Activated CD4-positive, alpha-beta memory T cell treated with anti-CD3 and anti-CD28 coated beads for 36 hours (primary cell): ENCODE measurements at regions of chr10 and their contacts with region 1.

Region 1: GRCh38 chr10:6445501-6446316 is 134.4 kb downstream of the PRKCQ start:
- DNase-seq: peak; percentile 76
- H3K4me3 Mint-ChIP-seq: no peak overlapping the region
- H3K27ac Mint-ChIP-seq: peak overlapping the region; percentile 58
- H3K4me1 Mint-ChIP-seq: peaks cover 39% of the 10 kb centered on the region
- H3K27me3 Mint-ChIP-seq: no peaks in the 10 kb centered on the region

Region 2: GRCh38 chr10:6416892-6417512 is 28.7 kb before region 1 on chr10:
- CTCF ChIA-PET with region 1: interaction called, 6 read pairs
- POLR2A ChIA-PET with region 1: interaction called, 3 read pairs
- intact Hi-C with region 1: loop called (anchors 2 kb)
- DNase-seq: no peak
- H3K4me3 Mint-ChIP-seq: no peak overlapping the region
- H3K27ac Mint-ChIP-seq: no peak overlapping the region
- H3K4me1 Mint-ChIP-seq: no peaks in the 10 kb centered on the region
- H3K27me3 Mint-ChIP-seq: no peaks in the 10 kb centered on the region

Region 3: GRCh38 chr10:6431861-6432260 is 13.8 kb before region 1 on chr10:
- CTCF ChIA-PET with region 1: interaction called, 11 read pairs
- POLR2A ChIA-PET with region 1: no interaction called
- intact Hi-C with region 1: no loop called
- DNase-seq: no peak
- H3K4me3 Mint-ChIP-seq: no peak overlapping the region
- H3K27ac Mint-ChIP-seq: no peak overlapping the region
- H3K4me1 Mint-ChIP-seq: peaks cover 7% of the 10 kb centered on the region
- H3K27me3 Mint-ChIP-seq: no peaks in the 10 kb centered on the region

Region 4: DNA sequence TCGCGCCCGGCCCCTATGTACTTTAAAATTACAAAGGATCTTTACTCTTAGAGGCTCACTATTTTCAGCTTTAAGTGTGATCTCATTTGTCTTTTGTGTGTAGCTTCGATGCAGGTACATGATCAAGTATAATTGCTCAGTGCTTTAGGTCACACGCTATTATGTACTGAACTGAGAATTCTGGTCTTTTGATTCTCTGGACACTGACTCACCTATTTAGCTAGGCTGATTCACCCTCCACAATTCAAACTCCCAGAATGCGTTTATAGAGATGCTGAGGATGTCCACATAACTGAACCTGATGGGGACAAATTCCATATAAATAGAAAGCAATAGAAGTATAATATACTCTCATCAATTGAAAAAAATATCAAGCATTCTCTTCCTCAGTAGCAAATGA is 76.5 kb after region 1 on chr10:
- CTCF ChIA-PET with region 1: no interaction called
- POLR2A ChIA-PET with region 1: no interaction called
- intact Hi-C with region 1: no loop called
- DNase-seq: no peak
- H3K4me3 Mint-ChIP-seq: no peak overlapping the region
- H3K27ac Mint-ChIP-seq: no peak overlapping the region
- H3K4me1 Mint-ChIP-seq: peaks cover 73% of the 10 kb centered on the region
- H3K27me3 Mint-ChIP-seq: no peaks in the 10 kb centered on the region

Region 5: DNA sequence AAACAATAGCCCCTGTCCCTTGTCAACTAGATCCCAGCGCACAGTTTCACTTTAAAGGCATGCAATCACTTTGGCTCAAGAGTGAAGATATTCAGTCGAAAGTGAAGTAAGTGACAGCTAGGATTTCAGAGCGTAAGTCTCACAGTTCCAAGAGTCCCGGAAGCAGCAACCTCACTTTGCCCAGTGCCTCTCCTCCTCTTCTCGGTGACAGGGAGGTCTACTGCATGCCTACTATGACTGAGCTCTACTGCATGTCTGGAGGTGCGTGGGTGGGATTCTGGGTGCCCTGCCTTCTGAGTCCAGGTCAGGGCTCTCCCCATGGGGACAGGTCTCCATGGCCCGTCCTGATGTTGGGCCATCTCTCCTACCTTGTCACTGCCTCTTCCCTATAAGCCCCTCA is 117.4 kb after region 1 on chr10:
- CTCF ChIA-PET with region 1: interaction called, 13 read pairs
- POLR2A ChIA-PET with region 1: interaction called, 3 read pairs
- intact Hi-C with region 1: no loop called
- DNase-seq: peak; percentile 86
- H3K4me3 Mint-ChIP-seq: peak overlapping the region; percentile 72
- H3K27ac Mint-ChIP-seq: peak overlapping the region; percentile 91
- H3K4me1 Mint-ChIP-seq: peaks cover 88% of the 10 kb centered on the region
- H3K27me3 Mint-ChIP-seq: no peaks in the 10 kb centered on the region

Region 6: DNA sequence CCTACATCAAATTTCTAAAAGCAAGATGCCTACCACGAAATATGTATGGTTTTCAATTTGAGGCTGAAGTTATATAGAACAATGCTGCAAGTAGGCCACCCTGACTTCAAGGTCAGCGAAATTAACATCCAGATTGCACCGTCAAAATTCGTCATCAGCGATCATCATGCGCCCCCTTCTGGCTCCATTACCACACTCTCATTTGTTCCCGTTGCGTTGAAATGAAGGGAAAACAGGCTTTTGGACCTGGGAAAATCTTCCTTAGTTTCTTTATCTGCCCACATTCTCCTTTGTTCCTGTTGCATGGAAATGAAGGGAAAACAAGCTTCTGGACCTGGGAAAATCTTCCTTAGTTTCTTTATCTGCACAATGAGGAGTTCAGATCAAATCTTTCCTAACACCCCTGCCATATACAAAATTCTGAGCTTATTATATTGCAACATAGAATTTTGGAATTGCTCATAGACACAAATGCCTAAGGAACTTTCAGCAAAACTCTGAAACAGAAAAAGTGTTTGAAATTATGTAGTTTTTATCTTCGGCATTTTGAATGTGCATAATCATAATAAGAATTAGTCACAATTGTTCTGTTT is 232.6 kb after region 1 on chr10:
- CTCF ChIA-PET with region 1: interaction called, 12 read pairs
- POLR2A ChIA-PET with region 1: no interaction called
- intact Hi-C with region 1: no loop called
- DNase-seq: peak; percentile 76
- H3K4me3 Mint-ChIP-seq: no peak overlapping the region
- H3K27ac Mint-ChIP-seq: no peak overlapping the region
- H3K4me1 Mint-ChIP-seq: peaks cover 4% of the 10 kb centered on the region
- H3K27me3 Mint-ChIP-seq: peaks cover 6% of the 10 kb centered on the region